CD4-positive, alpha-beta memory T cell (primary cell): ENCODE measurements at regions of chr19 and their contacts with region 1.

Region 1: GRCh38 chr19:35949131-35949530 is 13.0 kb downstream of the LRFN3 start:
- DNase-seq: no peak
- H3K4me3 ChIP-seq: no peak overlapping the region
- H3K4me3 Mint-ChIP-seq: peak overlapping the region in 1 of 8 donors; percentile 39
- H3K27ac ChIP-seq: no peak overlapping the region
- H3K27ac Mint-ChIP-seq: peak overlapping the region in 6 of 7 donors; percentile 48 to 87 (median 78)
- H3K4me1 ChIP-seq: peaks cover 46% of the 10 kb centered on the region
- H3K4me1 Mint-ChIP-seq: peaks cover 39 to 77% (median 56%) of the 10 kb centered on the region in 4 donors
- H3K27me3 ChIP-seq: no peaks in the 10 kb centered on the region
- H3K27me3 Mint-ChIP-seq: no peaks in the 10 kb centered on the region

Region 2: GRCh38 chr19:35860818-35861639 is 88.1 kb before region 1 on chr19:
- CTCF ChIA-PET with region 1: no interaction called
- POLR2A ChIA-PET with region 1: no interaction called
- intact Hi-C with region 1: no loop called
- DNase-seq: no peak
- H3K4me3 ChIP-seq: no peak overlapping the region
- H3K4me3 Mint-ChIP-seq: peak overlapping the region in 1 of 8 donors; percentile 62
- H3K27ac ChIP-seq: no peak overlapping the region
- H3K27ac Mint-ChIP-seq: no peak overlapping the region
- H3K4me1 ChIP-seq: peaks cover 14% of the 10 kb centered on the region
- H3K4me1 Mint-ChIP-seq: peaks cover 0 to 20% (median 3%) of the 10 kb centered on the region in 4 donors
- H3K27me3 ChIP-seq: peaks cover 15% of the 10 kb centered on the region
- H3K27me3 Mint-ChIP-seq: peaks cover 29 to 43% of the 10 kb centered on the region in 2 donors

Region 3: GRCh38 chr19:35931161-35931873 is 17.8 kb before region 1 on chr19:
- CTCF ChIA-PET with region 1: interaction called, 3 read pairs
- POLR2A ChIA-PET with region 1: interaction called, 21 read pairs
- intact Hi-C with region 1: no loop called
- DNase-seq: peak; percentile 99 to 100 (median 100)
- H3K4me3 ChIP-seq: peak overlapping the region in 1 of 2 donors; percentile 49
- H3K4me3 Mint-ChIP-seq: peak overlapping the region; percentile 76 to 85 (median 80)
- H3K27ac ChIP-seq: peak overlapping the region; percentile 54
- H3K27ac Mint-ChIP-seq: peak overlapping the region; percentile 86 to 97 (median 95)
- H3K4me1 ChIP-seq: peaks cover 47% of the 10 kb centered on the region
- H3K4me1 Mint-ChIP-seq: peaks cover 27 to 62% (median 38%) of the 10 kb centered on the region in 4 donors
- H3K27me3 ChIP-seq: no peaks in the 10 kb centered on the region
- H3K27me3 Mint-ChIP-seq: no peaks in the 10 kb centered on the region

Region 4: GRCh38 chr19:36014029-36014924 is 65.1 kb after region 1 on chr19 and contains the start of gene ALKBH6:
- CTCF ChIA-PET with region 1: no interaction called
- POLR2A ChIA-PET with region 1: interaction called, 11 read pairs
- intact Hi-C with region 1: no loop called
- DNase-seq: peak; percentile 97 to 99 (median 98)
- H3K4me3 ChIP-seq: peak within 1 kb of the TSS; percentile 92
- H3K4me3 Mint-ChIP-seq: peak within 1 kb of the TSS; percentile 94 to 99 (median 94)
- H3K27ac ChIP-seq: peak within 1 kb of the TSS; percentile 74
- H3K27ac Mint-ChIP-seq: peak within 1 kb of the TSS; percentile 85 to 99 (median 98)
- H3K4me1 ChIP-seq: peaks cover 30% of the 10 kb centered on the region
- H3K4me1 Mint-ChIP-seq: peaks cover 25 to 50% (median 33%) of the 10 kb centered on the region in 4 donors
- H3K27me3 ChIP-seq: no peaks in the 10 kb centered on the region
- H3K27me3 Mint-ChIP-seq: no peaks in the 10 kb centered on the region
- total RNA-seq, gene ALKBH6: 50.9 to 51.0 TPM